Panc1 (cell line): ENCODE measurements at regions of chr1 and their contacts with region 1.

Region 1: GRCh38 chr1:161921990-161922389 is 101.7 kb downstream of the OLFML2B start:
- DNase-seq: no peak
- ATAC-seq: no peak
- H3K4me3 ChIP-seq: no peak overlapping the region
- H3K27ac ChIP-seq: no peak overlapping the region
- H3K4me1 ChIP-seq: no peaks in the 10 kb centered on the region
- H3K27me3 ChIP-seq: no peaks in the 10 kb centered on the region
- CTCF ChIP-seq: no peak

Region 2: GRCh38 chr1:161872506-161872905 is 49.5 kb before region 1 on chr1:
- CTCF ChIA-PET with region 1: no interaction called
- POLR2A ChIA-PET with region 1: no interaction called
- in situ Hi-C with region 1: no loop called
- intact Hi-C with region 1: loop called (anchors 10 kb)
- DNase-seq: no peak
- ATAC-seq: no peak
- H3K4me3 ChIP-seq: no peak overlapping the region
- H3K27ac ChIP-seq: no peak overlapping the region
- H3K4me1 ChIP-seq: no peaks in the 10 kb centered on the region
- H3K27me3 ChIP-seq: no peaks in the 10 kb centered on the region
- CTCF ChIP-seq: no peak